ENCODE measurements at regions of chrX and their contacts with region 1.

Region 1: DNA sequence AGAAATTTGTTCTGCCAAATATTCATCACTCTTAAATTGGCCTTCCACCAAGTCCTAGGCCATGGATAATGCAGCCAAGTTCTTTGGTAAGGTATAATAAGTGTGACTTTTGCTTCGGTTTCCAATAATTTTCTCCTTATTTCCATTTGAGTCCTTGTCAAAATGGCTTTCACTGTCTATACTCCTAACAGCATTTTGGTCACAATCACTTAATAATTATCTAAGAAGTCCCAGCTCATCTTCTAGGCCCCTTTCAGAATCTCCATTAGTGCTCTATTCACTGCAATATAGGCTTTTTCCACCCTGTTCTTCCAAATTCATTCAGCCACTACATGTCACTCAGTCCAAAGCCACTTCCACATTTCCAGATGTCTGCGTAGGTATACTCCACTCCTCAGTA is 51.0 kb upstream of the SPIN4 start:
- DNase-seq: no peak
- H3K4me3 ChIP-seq: no peak overlapping the region
- H3K27ac ChIP-seq: no peak overlapping the region
- H3K4me1 ChIP-seq: no peaks in the 10 kb centered on the region
- H3K27me3 ChIP-seq: no peaks in the 10 kb centered on the region
- CTCF ChIP-seq: no peak

Region 2: GRCh38 chrX:63275127-63275526 is 127.0 kb before region 1 on chrX:
- CTCF ChIA-PET with region 1: interaction called, 11 read pairs
- POLR2A ChIA-PET with region 1: no interaction called
- intact Hi-C with region 1: no loop called
- DNase-seq: peak in 1 of 2 experiments; percentile 12
- H3K4me3 ChIP-seq: no peak overlapping the region
- H3K27ac ChIP-seq: no peak overlapping the region
- H3K4me1 ChIP-seq: no peaks in the 10 kb centered on the region
- H3K27me3 ChIP-seq: no peaks in the 10 kb centered on the region
- CTCF ChIP-seq: peak; percentile 62

Region 3: DNA sequence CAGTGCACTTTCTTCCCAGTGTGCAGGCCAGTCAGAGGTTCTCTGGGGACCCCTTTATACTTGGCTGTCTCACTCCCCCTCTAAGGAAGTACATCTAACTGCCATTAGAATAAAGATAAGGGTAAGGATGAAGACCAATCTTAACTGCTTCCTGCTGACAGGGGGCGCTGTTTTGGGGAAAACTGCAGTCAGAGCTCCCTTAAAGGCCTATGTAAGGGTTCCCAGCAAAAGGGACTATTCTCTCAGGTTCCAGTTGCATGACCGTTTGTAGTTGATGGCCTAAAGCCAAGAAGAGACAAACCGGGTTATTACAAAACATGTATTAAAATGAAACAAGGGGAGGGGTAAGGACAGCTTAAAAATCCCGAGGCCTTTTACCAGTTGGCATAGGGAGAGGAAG is 64.6 kb after region 1 on chrX:
- CTCF ChIA-PET with region 1: no interaction called
- POLR2A ChIA-PET with region 1: no interaction called
- intact Hi-C with region 1: no loop called
- DNase-seq: no peak
- H3K4me3 ChIP-seq: no peak overlapping the region
- H3K27ac ChIP-seq: no peak overlapping the region
- H3K4me1 ChIP-seq: no peaks in the 10 kb centered on the region
- H3K27me3 ChIP-seq: no peaks in the 10 kb centered on the region
- CTCF ChIP-seq: 0 out of 2 replicates have a peak, but pooled peaks have one; percentile 23

Region 4: GRCh38 chrX:63506320-63506719 is 104.2 kb after region 1 on chrX:
- CTCF ChIA-PET with region 1: no interaction called
- POLR2A ChIA-PET with region 1: no interaction called
- intact Hi-C with region 1: no loop called
- DNase-seq: no peak
- H3K4me3 ChIP-seq: no peak overlapping the region
- H3K27ac ChIP-seq: no peak overlapping the region
- H3K4me1 ChIP-seq: peaks cover 10% of the 10 kb centered on the region
- H3K27me3 ChIP-seq: no peaks in the 10 kb centered on the region
- CTCF ChIP-seq: peak; percentile 58